Heart left ventricle (tissue), 16 donors: ENCODE measurements at regions of chr1 and their contacts with region 1.

Region 1: DNA sequence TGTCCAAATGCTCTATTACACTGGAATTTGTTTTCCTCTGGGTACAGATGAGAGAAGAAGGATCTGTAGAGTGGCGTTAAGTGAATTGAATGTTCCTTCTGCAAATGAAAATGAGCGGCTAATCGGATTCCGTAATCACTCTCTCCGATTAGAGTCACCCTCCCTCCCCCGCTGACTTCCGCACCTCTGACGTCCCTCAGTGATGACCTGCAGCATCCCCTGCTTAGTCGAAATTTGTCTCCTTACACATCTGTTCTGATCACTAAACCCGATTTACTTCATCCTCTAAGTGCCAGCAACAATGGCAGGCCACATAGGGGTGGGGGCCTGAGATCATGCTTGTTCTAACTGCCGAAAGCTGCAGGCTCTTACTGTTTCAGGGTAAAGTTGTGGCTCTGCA is 378.7 kb downstream of the SEC16B start:
- DNase-seq: no peak
- ATAC-seq: no peak
- H3K4me3 ChIP-seq: no peak overlapping the region
- H3K27ac ChIP-seq: no peak overlapping the region
- H3K4me1 ChIP-seq: no peaks in the 10 kb centered on the region
- H3K27me3 ChIP-seq: peaks cover 0 to 20% (median 0%) of the 10 kb centered on the region in 9 donors
- CTCF ChIP-seq: no peak
- POLR2A ChIP-seq: no peak

Region 2: GRCh38 chr1:177010211-177010825 is 580.8 kb before region 1 on chr1:
- intact Hi-C with region 1: no loop called
- DNase-seq: no peak
- ATAC-seq: no peak
- H3K4me3 ChIP-seq: no peak overlapping the region
- H3K27ac ChIP-seq: no peak overlapping the region
- H3K4me1 ChIP-seq: no peaks in the 10 kb centered on the region
- H3K27me3 ChIP-seq: no peaks in the 10 kb centered on the region
- CTCF ChIP-seq: no peak
- POLR2A ChIP-seq: no peak

Region 3: GRCh38 chr1:177913762-177914540 is 322.8 kb after region 1 on chr1:
- intact Hi-C with region 1: loop called in 1 of 10 experiments (anchors 10 kb)
- DNase-seq: no peak
- ATAC-seq: peak in 3 of 4 donors; percentile 34 to 41 (median 36)
- H3K4me3 ChIP-seq: no peak overlapping the region
- H3K27ac ChIP-seq: no peak overlapping the region
- H3K4me1 ChIP-seq: no peaks in the 10 kb centered on the region
- H3K27me3 ChIP-seq: peaks cover 0 to 28% (median 0%) of the 10 kb centered on the region in 9 donors
- CTCF ChIP-seq: peak in 8 of 12 donors; percentile 12 to 45 (median 24)
- POLR2A ChIP-seq: no peak